ENCODE measurements at regions of chr2 and their contacts with region 1.

Region 1: DNA sequence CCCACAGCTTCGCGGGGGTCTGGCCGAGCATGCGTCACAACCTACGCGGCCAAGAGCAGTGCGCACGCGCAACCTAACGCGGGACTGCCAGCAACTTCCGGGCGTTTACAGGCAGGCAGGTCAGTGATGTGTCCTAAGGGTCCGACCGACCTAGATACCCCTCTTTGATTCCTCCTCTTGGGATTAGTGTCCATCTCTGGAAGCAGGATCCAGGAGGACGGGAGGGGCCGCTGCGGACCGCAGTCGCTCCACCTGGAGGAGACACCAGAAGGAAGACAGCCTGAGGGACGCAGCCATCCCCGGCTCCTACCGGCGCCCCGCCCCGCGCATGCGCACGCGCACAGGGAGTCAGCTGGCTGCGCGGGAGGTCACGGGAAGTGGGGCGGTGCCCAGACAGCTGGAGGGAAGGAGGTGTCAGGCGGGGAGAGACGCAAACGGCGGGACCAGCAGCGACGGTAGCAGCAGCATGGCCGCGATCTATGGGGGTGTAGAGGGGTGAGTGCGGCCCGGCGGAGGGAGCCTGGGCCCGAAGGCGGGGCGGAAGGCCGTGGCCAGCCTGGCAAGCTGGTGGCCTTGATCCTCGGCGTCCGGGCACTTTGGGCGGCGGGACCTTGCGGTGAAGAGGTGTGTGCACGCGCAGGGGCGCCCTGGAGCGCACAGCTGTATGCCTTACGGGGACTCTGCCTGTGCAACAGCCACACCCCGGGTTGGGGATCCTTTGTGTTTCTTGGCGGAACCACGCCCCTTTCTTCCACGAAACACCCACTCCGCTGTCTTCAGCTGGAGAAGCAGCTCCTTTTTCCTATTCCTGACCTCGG is at the start of gene NAGK:
- DNase-seq: peak; percentile 97 to 99 (median 99)
- ATAC-seq: peak; percentile 86
- H3K4me3 ChIP-seq: peak within 1 kb of the TSS; percentile 81
- H3K4me3 Mint-ChIP-seq: peak within 1 kb of the TSS; percentile 89 to 100 (median 98)
- H3K27ac ChIP-seq: peak within 1 kb of the TSS; percentile 96
- H3K27ac Mint-ChIP-seq: peak within 1 kb of the TSS; percentile 97 to 100 (median 99)
- H3K4me1 ChIP-seq: peaks cover 39 to 50% of the 10 kb centered on the region in 2 donors
- H3K4me1 Mint-ChIP-seq: peaks cover 40 to 68% (median 57%) of the 10 kb centered on the region in 7 donors
- H3K27me3 ChIP-seq: no peaks in the 10 kb centered on the region
- H3K27me3 Mint-ChIP-seq: peaks cover 0 to 7% (median 0%) of the 10 kb centered on the region in 5 donors
- total RNA-seq, gene NAGK: 92.4 to 169 (median 127) TPM

Region 2: GRCh38 chr2:70553584-70554337 is 514.7 kb before region 1 on chr2 and contains the start of gene TGFA:
- CTCF ChIA-PET with region 1: no interaction called
- POLR2A ChIA-PET with region 1: no interaction called
- intact Hi-C with region 1: loop called in 1 of 2 experiments (anchors 5 kb)
- DNase-seq: peak; percentile 51 to 69 (median 68)
- ATAC-seq: peak; percentile 85
- H3K4me3 ChIP-seq: peak within 1 kb of the TSS; percentile 65
- H3K4me3 Mint-ChIP-seq: peak within 1 kb of the TSS; percentile 79 to 96 (median 90)
- H3K27ac ChIP-seq: peak within 1 kb of the TSS; percentile 60
- H3K27ac Mint-ChIP-seq: peak within 1 kb of the TSS; percentile 46 to 89 (median 79)
- H3K4me1 ChIP-seq: peaks cover 14 to 21% of the 10 kb centered on the region in 2 donors
- H3K4me1 Mint-ChIP-seq: peaks cover 15 to 37% (median 32%) of the 10 kb centered on the region in 7 donors
- H3K27me3 ChIP-seq: no peaks in the 10 kb centered on the region
- H3K27me3 Mint-ChIP-seq: peaks cover 0 to 77% (median 4%) of the 10 kb centered on the region in 5 donors
- total RNA-seq, gene TGFA: 0.98 to 3.2 (median 2.3) TPM in 4 of 5 experiments, not detected in the other

Region 3: DNA sequence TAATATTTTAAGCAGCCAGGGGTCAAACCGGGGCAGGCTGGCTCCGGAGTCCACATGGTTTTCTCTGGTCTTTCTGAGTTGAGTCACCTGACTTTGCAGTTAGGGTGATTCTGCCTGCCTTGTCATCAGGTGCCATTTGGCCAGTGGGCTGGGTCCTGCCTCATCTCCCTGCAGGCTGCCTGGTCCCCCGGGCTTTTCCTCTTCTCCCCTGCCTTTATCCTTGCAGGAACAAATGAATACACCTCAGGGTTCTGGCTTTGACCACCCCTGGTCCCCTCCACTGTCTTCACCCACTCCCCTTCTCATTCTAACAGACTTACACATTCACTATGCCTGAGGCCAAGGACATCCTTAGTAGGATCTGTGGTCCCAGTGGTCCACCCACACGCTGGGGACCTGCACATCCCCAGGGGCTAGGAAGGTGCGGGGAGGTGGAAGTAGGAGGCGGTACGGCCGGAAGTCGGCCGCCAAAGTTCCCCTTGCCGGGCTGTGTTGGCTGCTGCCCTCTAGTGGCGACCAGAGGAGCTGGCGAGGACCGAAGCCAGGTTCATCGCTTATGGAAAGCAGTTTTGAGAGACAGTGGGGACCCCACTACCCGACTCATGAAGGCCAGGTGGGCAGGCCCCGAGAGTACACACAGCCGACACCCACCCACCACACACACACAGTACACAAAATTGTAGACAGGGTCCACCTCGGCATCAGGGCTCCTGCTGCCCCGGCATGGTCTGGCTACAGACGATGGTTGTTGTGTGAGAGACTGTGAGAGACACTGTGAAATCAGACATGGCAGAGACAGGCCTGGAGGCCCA is 67.4 kb before region 1 on chr2:
- CTCF ChIA-PET with region 1: interaction called, 7 read pairs
- POLR2A ChIA-PET with region 1: interaction called, 10 read pairs
- intact Hi-C with region 1: loop called in 1 of 2 experiments (anchors 1 kb)
- DNase-seq: peak; percentile 65 to 82 (median 76)
- ATAC-seq: peak; percentile 98
- H3K4me3 ChIP-seq: peak overlapping the region; percentile 66
- H3K4me3 Mint-ChIP-seq: peak overlapping the region; percentile 44 to 78 (median 64)
- H3K27ac ChIP-seq: peak overlapping the region; percentile 52
- H3K27ac Mint-ChIP-seq: peak overlapping the region in 8 of 9 donors; percentile 36 to 77 (median 60)
- H3K4me1 ChIP-seq: peaks cover 6 to 10% of the 10 kb centered on the region in 2 donors
- H3K4me1 Mint-ChIP-seq: peaks cover 6 to 29% (median 12%) of the 10 kb centered on the region in 7 donors
- H3K27me3 ChIP-seq: no peaks in the 10 kb centered on the region
- H3K27me3 Mint-ChIP-seq: peaks cover 0 to 6% (median 3%) of the 10 kb centered on the region in 5 donors

Region 4: GRCh38 chr2:71049365-71050360 is 18.8 kb before region 1 on chr2:
- CTCF ChIA-PET with region 1: no interaction called
- POLR2A ChIA-PET with region 1: interaction called, 4 read pairs
- intact Hi-C with region 1: loop called (anchors 1 to 2 kb)
- DNase-seq: peak in 2 of 9 donors; percentile 32 to 43
- ATAC-seq: no peak
- H3K4me3 ChIP-seq: no peak overlapping the region
- H3K4me3 Mint-ChIP-seq: no peak overlapping the region
- H3K27ac ChIP-seq: no peak overlapping the region
- H3K27ac Mint-ChIP-seq: peak overlapping the region in 2 of 9 donors; percentile 10 to 43
- H3K4me1 ChIP-seq: no peaks in the 10 kb centered on the region
- H3K4me1 Mint-ChIP-seq: peaks cover 0 to 9% (median 0%) of the 10 kb centered on the region in 7 donors
- H3K27me3 ChIP-seq: no peaks in the 10 kb centered on the region
- H3K27me3 Mint-ChIP-seq: peaks cover 0 to 5% (median 0%) of the 10 kb centered on the region in 5 donors

Region 5: DNA sequence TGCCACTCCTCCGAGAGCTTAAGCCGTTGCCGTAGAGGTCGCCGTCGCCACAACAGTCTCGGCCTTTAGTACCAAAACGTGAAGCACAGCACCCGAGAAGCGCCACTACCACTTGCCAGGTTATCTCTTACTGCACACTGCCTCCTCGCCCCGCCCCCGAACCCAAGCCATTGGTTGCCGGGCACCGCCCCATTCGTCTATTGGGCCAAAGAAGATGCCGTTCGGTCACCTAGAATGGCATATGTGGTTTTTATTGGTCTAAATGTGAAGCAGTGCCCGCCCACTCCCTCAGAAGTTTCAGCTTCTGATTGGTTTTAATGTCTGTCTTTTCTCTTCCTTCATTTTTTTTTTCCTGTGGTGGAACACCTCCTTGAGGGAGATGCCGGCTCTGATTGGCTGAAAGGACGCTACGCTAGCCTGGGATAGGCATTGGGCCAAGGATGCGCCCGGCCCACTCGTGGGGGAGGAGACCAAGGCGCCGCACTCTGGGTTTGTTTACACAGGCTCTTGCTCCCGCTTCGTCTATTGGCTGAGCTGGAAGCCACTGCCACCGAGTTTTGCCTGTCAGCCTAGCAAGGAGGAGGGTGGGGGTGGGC is 158.6 kb after region 1 on chr2 and contains the start of gene PAIP2B:
- CTCF ChIA-PET with region 1: no interaction called
- POLR2A ChIA-PET with region 1: interaction called, 29 read pairs
- intact Hi-C with region 1: loop called (anchors 1 kb)
- DNase-seq: peak; percentile 88 to 99 (median 99)
- ATAC-seq: peak; percentile 95
- H3K4me3 ChIP-seq: peak within 1 kb of the TSS; percentile 80
- H3K4me3 Mint-ChIP-seq: peak within 1 kb of the TSS; percentile 92 to 99 (median 97)
- H3K27ac ChIP-seq: peak within 1 kb of the TSS; percentile 82
- H3K27ac Mint-ChIP-seq: peak within 1 kb of the TSS; percentile 84 to 98 (median 92)
- H3K4me1 ChIP-seq: peaks cover 8 to 11% of the 10 kb centered on the region in 2 donors
- H3K4me1 Mint-ChIP-seq: peaks cover 13 to 34% (median 22%) of the 10 kb centered on the region in 7 donors
- H3K27me3 ChIP-seq: no peaks in the 10 kb centered on the region
- H3K27me3 Mint-ChIP-seq: peaks cover 0 to 28% (median 6%) of the 10 kb centered on the region in 5 donors
- total RNA-seq, gene PAIP2B: 1.3 to 14.1 (median 5.0) TPM

Region 6: DNA sequence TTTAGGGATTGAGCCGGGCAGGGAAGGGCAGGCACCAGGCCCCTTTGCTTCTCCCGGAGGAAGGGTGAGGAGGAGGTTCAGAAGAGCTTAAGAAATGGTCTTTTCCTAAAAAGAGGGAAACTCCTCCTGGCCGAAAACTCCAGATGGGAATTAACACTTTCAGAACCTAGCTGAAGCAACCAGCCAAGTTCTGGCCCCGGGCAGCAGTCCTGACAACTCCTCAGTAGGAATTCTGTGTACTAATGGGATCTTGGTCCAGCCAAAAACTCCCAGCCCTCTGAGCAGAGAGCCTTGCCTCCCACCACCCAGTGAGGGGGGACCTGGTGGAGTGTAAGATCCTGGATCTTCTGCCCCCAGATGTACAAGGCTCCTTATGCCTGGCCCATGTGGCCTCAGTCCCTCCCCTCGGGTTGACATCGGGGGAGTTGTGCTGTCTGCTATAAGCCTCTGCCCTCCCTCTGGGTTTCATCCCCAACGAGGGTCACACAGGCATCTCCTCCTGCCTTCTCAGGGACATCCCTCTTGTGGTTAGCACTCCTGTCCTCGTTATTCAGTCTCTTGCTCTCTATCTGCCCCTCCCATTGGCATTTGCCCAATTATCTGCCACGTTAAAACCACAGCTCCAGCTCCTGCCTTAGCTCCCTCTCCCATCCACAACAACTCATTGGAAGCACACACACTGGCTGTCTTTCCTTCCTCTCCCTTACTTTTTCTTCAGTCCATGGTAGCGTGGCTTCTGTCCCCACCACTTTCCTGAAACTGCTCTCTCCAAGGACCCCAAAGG is 894.7 kb after region 1 on chr2:
- CTCF ChIA-PET with region 1: no interaction called
- POLR2A ChIA-PET with region 1: no interaction called
- intact Hi-C with region 1: no loop called
- DNase-seq: no peak
- ATAC-seq: no peak
- H3K4me3 ChIP-seq: no peak overlapping the region
- H3K4me3 Mint-ChIP-seq: no peak overlapping the region
- H3K27ac ChIP-seq: no peak overlapping the region
- H3K27ac Mint-ChIP-seq: no peak overlapping the region
- H3K4me1 ChIP-seq: no peaks in the 10 kb centered on the region
- H3K4me1 Mint-ChIP-seq: no peaks in the 10 kb centered on the region
- H3K27me3 ChIP-seq: peaks cover 0 to 3% of the 10 kb centered on the region in 2 donors
- H3K27me3 Mint-ChIP-seq: peaks cover 0 to 29% (median 9%) of the 10 kb centered on the region in 5 donors